ENCODE measurements at regions of chr12 and their contacts with region 1.

Region 1: DNA sequence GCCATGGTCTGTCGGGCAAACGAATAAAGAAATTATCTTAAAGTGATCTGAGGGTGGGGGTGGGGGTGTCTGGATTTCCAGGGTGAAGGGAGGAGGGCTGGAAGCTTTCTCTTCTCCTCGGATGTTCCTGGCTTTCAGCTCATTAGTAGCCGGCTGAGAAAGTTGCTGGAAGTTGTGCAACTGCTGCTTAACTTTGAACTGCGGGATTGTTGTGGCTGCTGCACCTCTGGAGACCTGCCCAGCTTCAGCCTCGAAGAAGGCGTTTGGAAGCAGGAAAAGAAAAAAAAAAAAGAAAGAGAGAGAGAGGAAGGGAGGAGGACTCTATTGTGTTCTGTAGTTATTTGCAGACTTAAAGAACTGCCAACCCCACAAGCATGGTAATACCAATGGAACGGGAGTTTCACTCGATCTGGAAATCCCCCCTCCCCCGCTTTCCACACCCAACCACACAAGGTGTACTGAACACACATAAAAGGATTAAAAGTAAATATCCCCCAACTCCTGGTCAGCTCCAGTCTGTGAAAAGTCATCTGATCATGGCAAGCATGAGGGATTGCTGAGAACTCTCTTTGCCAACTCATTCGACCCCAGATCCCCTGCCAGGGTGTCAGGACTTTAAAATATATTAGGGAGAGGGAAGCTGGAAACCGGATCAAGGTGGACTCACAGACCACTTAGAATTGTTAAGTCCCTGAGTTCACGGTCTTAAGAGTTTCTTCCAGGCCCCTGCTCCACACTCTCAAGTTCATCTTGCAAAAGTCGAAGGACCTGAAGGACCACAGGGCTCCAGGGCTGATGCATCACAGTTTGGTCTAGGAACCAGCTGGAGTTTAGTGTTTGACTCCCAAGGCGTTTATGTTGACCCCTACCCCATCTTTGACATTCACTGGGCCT is at the start of gene RASSF9:
- DNase-seq: peak; percentile 86
- H3K4me3 ChIP-seq: peak within 1 kb of the TSS; percentile 49 to 83 (median 69)
- H3K27ac ChIP-seq: peak within 1 kb of the TSS; percentile 93
- H3K4me1 ChIP-seq: peaks cover 17% of the 10 kb centered on the region
- H3K27me3 ChIP-seq: no peaks in the 10 kb centered on the region
- CTCF ChIP-seq: no peak
- total RNA-seq, gene RASSF9: 7.1 to 13.5 TPM

Region 2: GRCh38 chr12:85784096-85784720 is 52.2 kb before region 1 on chr12:
- CTCF ChIA-PET with region 1: no interaction called
- dilution Hi-C with region 1: no loop called
- in situ Hi-C with region 1: no loop called
- intact Hi-C with region 1: loop called (anchors 1 kb)
- DNase-seq: peak; percentile 68
- H3K4me3 ChIP-seq: no peak overlapping the region
- H3K27ac ChIP-seq: peak overlapping the region; percentile 25
- H3K4me1 ChIP-seq: no peaks in the 10 kb centered on the region
- H3K27me3 ChIP-seq: no peaks in the 10 kb centered on the region
- CTCF ChIP-seq: no peak